ENCODE measurements at regions of chr22 and their contacts with region 1.

Region 1: GRCh38 chr22:36775964-36776669 is at the start of gene IFT27:
- DNase-seq: peak; percentile 99
- H3K4me3 ChIP-seq: peak within 1 kb of the TSS; percentile 72 to 99 (median 88)
- H3K27ac ChIP-seq: peak within 1 kb of the TSS; percentile 82 to 96 (median 92)
- H3K4me1 ChIP-seq: peaks cover 8 to 11% (median 10%) of the 10 kb centered on the region in 4 donors
- H3K27me3 ChIP-seq: no peaks in the 10 kb centered on the region
- CTCF ChIP-seq: no peak
- EP300 ChIP-seq: no peak
- POLR2A ChIP-seq: peak; percentile 54
- total RNA-seq, gene IFT27: 5.8 to 22.7 (median 12.9) TPM

Region 2: GRCh38 chr22:36329254-36330078 is 446.7 kb before region 1 on chr22:
- in situ Hi-C with region 1: no loop called
- intact Hi-C with region 1: no loop called
- DNase-seq: peak; percentile 60
- H3K4me3 ChIP-seq: peak overlapping the region in 1 of 4 donors; percentile 7
- H3K27ac ChIP-seq: peak overlapping the region; percentile 92 to 99 (median 96)
- H3K4me1 ChIP-seq: peaks cover 84 to 99% (median 98%) of the 10 kb centered on the region in 4 donors
- H3K27me3 ChIP-seq: no peaks in the 10 kb centered on the region
- CTCF ChIP-seq: no peak
- EP300 ChIP-seq: peak; percentile 54
- POLR2A ChIP-seq: peak; percentile 25

Region 3: DNA sequence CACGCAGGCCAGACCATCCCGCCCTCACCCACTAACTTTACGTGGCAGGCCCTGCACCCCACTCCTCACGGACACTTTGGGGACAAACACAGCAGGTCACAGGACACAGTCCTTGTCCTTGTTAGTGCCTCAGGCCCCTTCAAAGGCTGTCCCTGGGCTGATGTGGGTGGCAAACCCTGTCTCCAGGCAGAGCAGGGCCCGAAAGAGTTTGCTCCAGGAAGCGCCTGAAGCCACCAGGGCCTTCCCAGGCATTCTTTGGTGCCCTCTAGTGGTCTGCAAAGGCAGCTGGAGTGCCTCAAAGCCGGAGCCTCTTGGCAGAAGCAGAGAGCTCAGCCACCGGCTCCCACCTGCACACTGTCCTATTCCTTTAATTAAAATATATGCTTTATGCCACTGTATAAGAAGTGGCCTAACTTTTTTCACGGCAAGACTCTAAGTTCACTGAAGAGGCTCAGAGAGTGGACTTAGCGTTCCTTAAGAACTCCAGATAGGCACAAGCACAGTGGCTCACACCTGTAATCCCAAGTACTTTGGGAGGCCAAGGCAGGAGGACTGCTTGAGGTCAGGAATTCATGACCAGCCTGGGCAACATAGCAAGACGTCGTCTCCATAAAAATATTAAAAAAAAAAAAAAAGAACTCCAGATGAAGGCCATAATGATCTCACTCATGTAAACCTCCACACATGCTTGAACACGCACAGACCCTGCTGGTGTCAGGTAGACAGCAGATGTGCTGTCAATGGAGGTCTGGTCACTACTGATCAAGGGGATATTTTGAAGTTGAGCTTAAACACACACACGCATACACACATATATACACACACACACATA is 305.7 kb before region 1 on chr22:
- in situ Hi-C with region 1: no loop called
- intact Hi-C with region 1: no loop called
- DNase-seq: peak; percentile 87
- H3K4me3 ChIP-seq: no peak overlapping the region
- H3K27ac ChIP-seq: peak overlapping the region; percentile 98
- H3K4me1 ChIP-seq: peaks cover 20 to 51% (median 30%) of the 10 kb centered on the region in 4 donors
- H3K27me3 ChIP-seq: no peaks in the 10 kb centered on the region
- CTCF ChIP-seq: peak; percentile 92 to 95 (median 94)
- EP300 ChIP-seq: no peak
- POLR2A ChIP-seq: no peak

Region 4: GRCh38 chr22:37218771-37219411 is 442.8 kb after region 1 on chr22:
- in situ Hi-C with region 1: loop called in 1 of 4 experiments (anchors 25 kb)
- intact Hi-C with region 1: no loop called
- DNase-seq: peak; percentile 52
- H3K4me3 ChIP-seq: no peak overlapping the region
- H3K27ac ChIP-seq: peak overlapping the region; percentile 2 to 78 (median 36)
- H3K4me1 ChIP-seq: peaks cover 0 to 3% (median 0%) of the 10 kb centered on the region in 4 donors
- H3K27me3 ChIP-seq: no peaks in the 10 kb centered on the region
- CTCF ChIP-seq: no peak
- EP300 ChIP-seq: no peak
- POLR2A ChIP-seq: no peak

Measured in transverse colon (tissue), 4 donors.